ENCODE measurements at regions of chr1 and their contacts with region 1.

Region 1: DNA sequence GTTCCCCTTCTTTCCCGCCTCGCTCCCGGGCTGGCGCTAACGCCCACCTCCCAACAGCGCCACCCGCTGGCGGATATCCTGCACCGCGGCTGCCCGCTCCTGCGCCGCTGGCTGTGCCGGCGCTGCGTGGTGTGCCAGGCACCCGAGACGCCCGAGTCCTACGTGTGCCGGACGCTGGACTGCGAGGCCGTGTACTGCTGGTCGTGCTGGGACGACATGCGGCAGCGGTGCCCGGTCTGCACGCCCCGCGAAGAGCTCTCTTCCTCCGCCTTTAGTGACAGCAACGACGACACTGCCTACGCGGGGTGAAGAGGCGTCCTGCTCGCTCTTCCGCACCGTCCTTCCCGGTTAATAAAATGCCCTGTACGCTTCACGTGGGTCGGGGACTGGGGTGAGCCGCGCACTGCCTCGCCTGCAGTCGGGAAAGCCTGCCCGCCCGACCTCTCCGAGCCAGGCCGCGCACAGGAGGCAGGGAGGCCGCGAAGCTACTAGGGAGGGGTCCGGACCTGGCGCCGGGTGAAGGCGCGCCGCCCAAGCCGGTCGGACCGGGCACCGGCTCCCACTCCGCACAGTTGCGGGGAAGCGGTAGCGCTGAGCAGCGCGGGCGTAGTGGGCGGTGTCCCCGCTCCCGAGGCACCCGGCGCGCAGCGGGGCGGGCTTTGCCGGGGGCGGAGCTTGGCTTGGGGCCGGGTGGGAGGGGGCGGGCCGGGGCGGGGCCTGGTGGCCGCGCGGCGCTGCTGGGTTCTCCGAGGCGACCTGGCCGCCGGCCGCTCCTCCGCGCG is at the start of gene ADAM15:
- DNase-seq: peak; percentile 92
- ATAC-seq: peak; percentile 72
- H3K4me3 Mint-ChIP-seq: peak within 1 kb of the TSS; percentile 82
- H3K27ac Mint-ChIP-seq: peak within 1 kb of the TSS; percentile 72; the same call in 1 of the 2 replicates
- H3K4me1 Mint-ChIP-seq: peaks cover 33% of the 10 kb centered on the region
- H3K27me3 Mint-ChIP-seq: peaks cover 20% of the 10 kb centered on the region
- CTCF ChIP-seq: peak; percentile 97
- total RNA-seq, gene ADAM15: 32.1 to 38.4 TPM (median 33.2 TPM) in 3 replicates

Region 2: DNA sequence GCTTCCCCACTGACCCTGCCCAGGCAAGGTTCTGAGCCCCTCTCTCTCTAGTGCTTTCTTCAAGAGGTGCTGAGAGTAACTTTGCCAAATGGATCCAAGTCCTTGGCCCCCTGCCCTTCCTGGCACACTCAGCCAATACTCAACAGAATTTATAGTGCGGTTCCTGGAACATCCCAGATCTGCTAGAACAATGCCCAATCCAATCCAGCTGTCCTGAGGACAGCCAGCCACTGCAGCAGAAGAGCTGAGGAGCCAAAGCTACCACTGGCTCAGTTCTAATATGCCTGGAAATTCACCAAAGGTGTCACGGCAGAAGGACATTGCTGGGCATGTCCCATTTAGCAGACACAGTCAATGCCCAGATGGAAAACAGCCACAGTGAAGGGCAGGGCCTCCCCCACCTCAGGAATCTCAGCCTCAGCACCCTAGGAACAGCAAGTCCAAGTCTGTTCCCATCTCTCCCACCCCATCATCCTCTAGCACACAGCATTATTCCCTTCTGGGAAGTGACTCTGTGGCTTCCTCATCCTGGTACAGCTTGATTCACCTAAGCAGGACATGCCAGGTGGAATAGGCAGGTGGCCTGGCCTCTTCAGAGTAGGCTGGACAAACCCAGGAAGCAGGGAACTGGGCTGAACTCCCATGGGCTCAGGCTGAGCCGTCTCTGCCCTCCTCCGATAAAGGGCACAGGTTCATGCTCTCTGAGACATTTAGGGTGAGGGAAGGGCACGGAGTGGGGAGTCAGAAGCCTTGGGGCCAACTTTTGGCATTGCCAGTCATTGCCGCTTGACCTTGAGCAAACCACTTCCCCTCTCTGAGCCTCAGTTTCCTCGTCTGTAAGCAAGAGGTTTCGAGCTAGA is 138.8 kb before region 1 on chr1:
- CTCF ChIA-PET with region 1: interaction called, 10 read pairs
- POLR2A ChIA-PET with region 1: no interaction called
- DNase-seq: no peak
- ATAC-seq: no peak
- H3K4me3 Mint-ChIP-seq: no peak overlapping the region
- H3K27ac Mint-ChIP-seq: no peak overlapping the region
- H3K4me1 Mint-ChIP-seq: 0 out of 2 replicates have a peak, but pooled peaks cover 3% of the 10 kb centered on the region
- H3K27me3 Mint-ChIP-seq: peaks cover 7% of the 10 kb centered on the region
- CTCF ChIP-seq: no peak

Region 3: DNA sequence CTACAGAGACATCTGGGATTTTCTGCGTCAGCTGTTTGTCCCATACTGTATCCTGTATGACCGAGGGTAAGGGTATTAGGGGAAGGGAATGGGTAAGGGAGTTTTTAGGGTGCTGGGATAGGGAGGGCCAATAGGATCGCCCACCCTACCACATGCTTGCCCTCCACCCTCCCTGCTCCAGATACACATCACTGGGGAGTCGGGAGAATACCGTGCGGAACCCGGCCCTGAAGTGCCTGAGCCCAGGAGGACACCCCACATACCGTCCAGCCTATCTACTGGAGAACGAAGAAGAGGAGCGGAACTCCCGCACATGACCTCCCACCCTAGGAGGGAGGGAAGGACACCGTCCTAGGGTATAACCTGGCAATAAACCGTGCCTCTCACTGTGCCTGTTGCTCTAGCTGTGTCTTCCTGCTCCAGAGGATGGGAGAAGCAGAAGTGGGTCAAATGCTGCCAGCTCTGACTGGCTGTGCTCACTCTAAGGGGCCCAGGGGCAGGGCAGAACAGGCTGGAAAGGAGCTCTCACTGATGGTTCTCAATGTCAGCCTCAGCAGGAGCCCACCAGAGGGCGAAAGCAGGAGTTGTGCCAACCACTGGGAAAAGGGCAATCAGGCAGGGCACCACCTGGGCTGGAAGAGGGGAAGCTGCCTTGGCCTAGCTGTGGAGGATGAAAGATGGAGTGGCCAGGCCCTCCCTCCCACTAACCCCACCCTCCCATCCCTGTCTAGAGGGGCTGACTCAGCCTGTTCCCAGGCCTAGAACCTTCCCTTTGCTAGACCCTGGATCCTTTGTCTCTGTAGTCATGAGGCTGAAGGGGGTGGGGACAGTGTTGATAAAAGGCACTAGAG is 57.8 kb before region 1 on chr1:
- CTCF ChIA-PET with region 1: interaction called, 10 read pairs
- POLR2A ChIA-PET with region 1: no interaction called
- DNase-seq: no peak
- ATAC-seq: peak; percentile 56
- H3K4me3 Mint-ChIP-seq: no peak overlapping the region
- H3K27ac Mint-ChIP-seq: peak overlapping the region; percentile 70
- H3K4me1 Mint-ChIP-seq: peaks cover 11% of the 10 kb centered on the region; the same call in 1 of the 2 replicates
- H3K27me3 Mint-ChIP-seq: no peaks in the 10 kb centered on the region; the same call in 1 of the 2 replicates
- CTCF ChIP-seq: no peak

Region 4: DNA sequence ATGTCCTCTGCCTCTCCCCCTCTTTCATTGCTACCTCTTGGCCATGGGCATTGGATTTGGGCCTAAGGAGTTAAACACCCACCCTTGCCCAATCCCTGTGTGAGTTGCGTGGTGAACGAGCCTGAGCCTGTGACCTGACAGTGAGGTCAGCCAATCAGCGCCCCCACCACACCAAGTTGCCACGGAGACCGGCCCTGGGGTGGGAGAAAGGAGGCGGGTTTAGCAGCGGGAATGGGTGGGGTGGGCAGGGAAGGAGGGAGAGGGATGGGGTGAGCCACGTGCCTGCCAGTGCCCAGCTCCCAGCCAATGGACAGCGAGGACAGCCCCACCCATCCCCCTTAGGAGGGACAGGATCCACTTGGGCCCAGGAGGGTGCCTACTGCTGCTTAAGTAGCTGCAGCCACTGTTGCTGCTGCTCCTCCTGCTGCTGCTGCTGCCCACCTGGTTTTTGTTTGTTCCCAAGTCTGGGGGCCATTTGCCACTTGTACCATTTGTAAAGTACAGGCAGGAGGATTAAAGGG is 38.7 kb before region 1 on chr1:
- CTCF ChIA-PET with region 1: interaction called, 49 read pairs
- POLR2A ChIA-PET with region 1: interaction called, 4 read pairs
- DNase-seq: peak; percentile 88
- ATAC-seq: peak; percentile 78
- H3K4me3 Mint-ChIP-seq: peak overlapping the region; percentile 45
- H3K27ac Mint-ChIP-seq: peak overlapping the region; percentile 95
- H3K4me1 Mint-ChIP-seq: peaks cover 49% of the 10 kb centered on the region
- H3K27me3 Mint-ChIP-seq: no peaks in the 10 kb centered on the region
- CTCF ChIP-seq: no peak

Region 5: DNA sequence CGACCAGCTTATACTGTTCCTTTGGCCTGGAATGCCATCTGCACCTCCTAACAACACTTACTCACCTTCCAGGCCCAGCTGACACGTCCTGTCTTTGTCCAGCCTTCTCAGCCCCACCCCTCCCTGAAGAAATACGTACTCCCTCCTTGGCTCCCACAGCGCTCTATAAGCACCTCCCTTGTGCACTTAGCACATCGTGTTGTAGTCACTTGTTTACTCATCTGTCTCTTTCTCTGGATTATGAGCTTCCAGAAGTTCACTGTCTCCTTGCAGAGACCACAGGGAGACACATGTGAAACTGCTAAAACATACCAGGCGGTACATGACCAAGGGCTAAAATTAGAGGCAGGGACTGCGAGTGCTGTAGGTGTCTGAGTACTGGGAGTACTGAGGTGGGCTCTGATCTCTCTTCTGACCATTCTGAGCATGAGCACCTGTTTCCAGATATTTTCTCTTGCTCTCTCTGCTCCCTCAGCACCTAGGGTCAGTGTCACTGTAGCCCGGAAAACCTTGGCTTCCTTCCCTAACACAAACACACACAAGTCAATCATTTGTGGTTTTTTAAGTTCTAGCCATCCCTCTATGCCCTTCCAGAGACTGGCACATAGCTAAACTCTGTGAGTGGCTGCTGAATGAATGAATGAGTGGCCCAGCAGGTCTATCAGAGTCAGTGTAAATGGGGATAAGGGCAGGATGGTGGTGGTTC is 12.0 kb before region 1 on chr1:
- CTCF ChIA-PET with region 1: interaction called, 20 read pairs
- POLR2A ChIA-PET with region 1: no interaction called
- DNase-seq: no peak
- ATAC-seq: no peak
- H3K4me3 Mint-ChIP-seq: no peak overlapping the region
- H3K27ac Mint-ChIP-seq: no peak overlapping the region
- H3K4me1 Mint-ChIP-seq: no peaks in the 10 kb centered on the region; the same call in 1 of the 2 replicates
- H3K27me3 Mint-ChIP-seq: peaks cover 10% of the 10 kb centered on the region
- CTCF ChIP-seq: no peak

Region 6: DNA sequence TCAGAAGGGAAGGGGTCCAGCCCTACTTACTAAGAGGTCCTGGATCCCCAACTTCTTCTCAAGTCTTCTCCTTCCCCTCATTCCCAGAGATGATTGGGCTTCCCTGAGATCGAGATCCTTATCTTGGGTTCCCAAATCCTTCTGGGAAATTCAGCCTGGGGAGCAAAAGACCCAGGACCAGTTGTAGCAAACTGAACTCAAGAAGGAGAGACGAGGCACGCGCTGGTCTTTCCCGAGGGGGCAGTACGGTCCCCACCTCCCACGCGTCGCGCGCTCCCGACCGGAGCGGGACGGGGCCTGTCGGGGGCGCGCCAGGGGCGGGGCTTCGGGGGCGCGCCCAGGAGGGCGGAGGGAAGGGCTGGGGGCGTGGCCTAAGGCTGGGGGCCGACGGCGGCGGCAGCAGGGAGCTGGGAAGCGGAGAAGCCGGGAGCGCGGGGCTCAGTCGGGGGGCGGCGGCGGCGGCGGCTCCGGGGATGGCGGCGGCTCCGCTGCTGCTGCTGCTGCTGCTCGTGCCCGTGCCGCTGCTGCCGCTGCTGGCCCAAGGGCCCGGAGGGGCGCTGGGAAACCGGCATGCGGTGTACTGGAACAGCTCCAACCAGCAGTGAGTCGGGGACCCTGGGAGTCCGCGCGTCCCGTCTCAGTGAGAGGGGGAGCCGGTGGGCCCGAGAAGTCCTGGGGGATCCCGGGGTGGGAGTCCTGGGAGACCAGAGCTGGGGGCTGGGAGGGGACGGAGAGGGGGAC is 27.9 kb after region 1 on chr1 and contains the start of gene EFNA3:
- CTCF ChIA-PET with region 1: interaction called, 27 read pairs
- POLR2A ChIA-PET with region 1: interaction called, 3 read pairs
- DNase-seq: peak; percentile 84
- ATAC-seq: peak; percentile 38
- H3K4me3 Mint-ChIP-seq: peak within 1 kb of the TSS; percentile 76
- H3K27ac Mint-ChIP-seq: no peak within 1 kb of the TSS
- H3K4me1 Mint-ChIP-seq: peaks cover 25% of the 10 kb centered on the region
- H3K27me3 Mint-ChIP-seq: peaks cover 84% of the 10 kb centered on the region
- CTCF ChIP-seq: no peak
- total RNA-seq, gene EFNA3: 12.5 to 15.4 TPM (median 15.4 TPM) in 3 replicates

Region 7: DNA sequence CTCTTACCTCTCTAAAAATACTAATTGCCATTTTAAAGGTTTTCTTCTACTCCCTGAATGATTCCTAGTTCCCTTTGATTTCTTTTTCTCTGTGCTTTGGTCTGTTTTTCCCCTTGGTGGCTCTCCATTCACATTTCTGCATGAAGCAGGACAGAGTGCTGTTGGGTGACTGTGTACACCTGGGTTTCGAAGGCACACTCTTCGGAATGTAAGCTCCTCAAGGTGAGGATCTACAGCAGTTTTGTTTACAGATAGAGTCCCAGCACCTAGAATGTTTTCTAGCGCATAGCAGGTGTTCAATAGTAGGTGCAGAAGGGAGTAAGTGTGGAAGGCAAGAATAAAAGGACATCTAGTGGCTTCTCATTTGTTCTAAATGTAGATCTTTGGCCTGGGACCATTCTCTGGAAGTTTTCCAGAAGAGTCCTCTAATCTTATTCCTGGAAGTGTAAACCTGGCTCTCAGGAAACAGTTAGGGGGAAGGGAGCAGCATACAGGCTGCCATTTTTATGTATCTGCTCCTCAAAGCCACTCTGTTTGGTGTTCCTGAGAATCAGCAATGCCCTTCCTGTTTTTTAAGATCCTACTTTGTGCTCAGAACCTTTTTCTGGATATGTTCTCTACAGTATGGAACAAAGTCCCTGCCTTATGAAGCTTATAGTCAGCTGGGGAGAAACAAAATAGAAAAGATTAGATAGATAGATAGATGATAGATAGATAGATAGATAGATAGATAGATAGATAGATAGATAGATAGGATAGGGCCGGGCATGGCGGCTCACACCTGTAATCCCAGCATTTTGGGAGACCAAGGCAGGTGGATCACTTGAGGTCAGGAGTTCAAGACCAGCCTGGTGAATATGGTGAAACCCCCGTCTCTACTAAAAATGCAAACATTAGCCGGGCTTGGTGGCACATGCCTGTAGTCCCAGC is 54.1 kb after region 1 on chr1:
- CTCF ChIA-PET with region 1: no interaction called
- POLR2A ChIA-PET with region 1: no interaction called
- DNase-seq: no peak
- ATAC-seq: no peak
- H3K4me3 Mint-ChIP-seq: no peak overlapping the region
- H3K27ac Mint-ChIP-seq: no peak overlapping the region
- H3K4me1 Mint-ChIP-seq: no peaks in the 10 kb centered on the region
- H3K27me3 Mint-ChIP-seq: peaks cover 14% of the 10 kb centered on the region
- CTCF ChIP-seq: no peak

Region 8: GRCh38 chr1:155185351-155186066 is 134.8 kb after region 1 on chr1:
- CTCF ChIA-PET with region 1: no interaction called
- POLR2A ChIA-PET with region 1: no interaction called
- DNase-seq: no peak
- ATAC-seq: peak; percentile 56
- H3K4me3 Mint-ChIP-seq: no peak overlapping the region
- H3K27ac Mint-ChIP-seq: peak overlapping the region; percentile 87
- H3K4me1 Mint-ChIP-seq: peaks cover 29% of the 10 kb centered on the region
- H3K27me3 Mint-ChIP-seq: no peaks in the 10 kb centered on the region
- CTCF ChIP-seq: no peak